ENCODE measurements at regions of chr15 and their contacts with region 1.

Region 1: DNA sequence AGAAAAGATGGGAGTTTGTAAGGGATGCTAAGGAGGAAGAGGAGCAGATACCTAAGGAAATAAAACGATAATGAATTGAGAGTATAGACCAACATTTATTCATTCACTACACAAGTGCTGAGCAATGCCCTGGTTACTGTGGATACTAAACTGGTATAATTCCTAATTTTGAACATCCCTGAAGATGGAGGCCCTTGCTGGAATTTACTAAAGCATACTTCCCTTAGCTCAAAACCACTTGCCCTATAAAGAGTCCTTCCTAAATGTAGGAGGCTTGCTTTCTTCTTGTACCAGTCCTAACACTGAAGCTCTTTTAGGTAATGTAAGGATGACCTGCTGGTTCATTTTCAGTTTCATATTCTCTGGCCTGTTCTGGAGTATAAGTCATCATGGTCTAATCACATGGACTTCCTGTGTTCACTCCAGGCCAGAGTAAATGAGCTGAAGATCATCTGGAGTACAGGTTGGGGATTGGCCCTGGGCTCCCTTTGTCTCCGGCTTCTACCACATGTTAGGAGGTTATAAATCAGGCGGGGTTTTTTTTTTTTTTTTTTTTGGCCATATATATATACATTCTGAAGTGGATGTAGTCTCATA is 40.1 kb upstream of the MTMR10 start:
- DNase-seq: no peak
- ATAC-seq: no peak

Region 2: DNA sequence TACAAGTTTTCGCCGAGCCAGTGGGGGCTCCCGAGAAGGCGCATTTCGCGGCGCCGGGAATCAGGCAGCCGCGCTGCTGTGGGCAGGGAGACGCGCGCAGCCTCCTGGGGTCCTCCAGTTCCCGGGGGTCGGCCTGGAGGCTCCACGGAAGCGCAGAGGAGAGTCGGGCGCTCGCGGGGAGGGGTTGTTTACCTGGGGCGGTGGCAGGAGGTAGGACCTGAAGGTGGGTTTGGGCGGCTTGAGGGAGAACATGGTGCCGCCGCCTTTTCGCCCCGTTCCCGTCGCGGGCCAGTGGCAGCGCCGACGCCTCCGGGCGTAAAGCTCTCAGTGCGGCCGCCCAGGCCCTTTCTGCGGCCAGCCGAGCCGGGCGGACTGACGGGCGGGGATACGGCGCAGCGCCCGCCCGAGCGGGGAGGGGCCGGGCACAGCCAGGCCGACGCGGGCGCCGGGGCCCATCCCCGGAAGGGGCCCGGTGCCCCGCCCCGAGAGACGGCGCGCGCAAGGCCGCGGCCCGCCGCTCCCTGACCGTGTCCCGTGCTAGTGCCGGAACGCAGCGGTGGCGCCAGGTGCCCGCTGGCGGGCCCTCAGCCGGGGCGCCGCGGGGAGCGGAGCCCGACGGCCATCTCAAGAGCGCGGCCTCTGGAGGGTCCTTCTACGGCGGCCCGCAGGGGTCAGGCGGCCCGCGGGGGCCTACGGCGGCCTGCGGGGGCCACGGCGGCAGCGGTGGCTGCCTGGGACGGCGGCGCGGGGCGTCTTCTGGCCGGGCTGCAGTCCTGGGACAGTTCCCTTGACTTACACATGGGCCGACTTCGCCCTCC is 40.1 kb before region 1 on chr15 and contains the start of gene MTMR10:
- intact Hi-C with region 1: loop called (anchors 5 kb)
- DNase-seq: peak; percentile 91
- ATAC-seq: peak; percentile 97
- total RNA-seq, gene MTMR10: 31.4 TPM

Region 3: GRCh38 chr15:31062310-31062847 is 30.8 kb after region 1 on chr15:
- intact Hi-C with region 1: loop called (anchors 2 kb)
- DNase-seq: no peak
- ATAC-seq: no peak

Region 4: GRCh38 chr15:31098953-31099740 is 67.6 kb after region 1 on chr15:
- intact Hi-C with region 1: loop called (anchors 10 kb)
- DNase-seq: no peak
- ATAC-seq: no peak

Region 5: DNA sequence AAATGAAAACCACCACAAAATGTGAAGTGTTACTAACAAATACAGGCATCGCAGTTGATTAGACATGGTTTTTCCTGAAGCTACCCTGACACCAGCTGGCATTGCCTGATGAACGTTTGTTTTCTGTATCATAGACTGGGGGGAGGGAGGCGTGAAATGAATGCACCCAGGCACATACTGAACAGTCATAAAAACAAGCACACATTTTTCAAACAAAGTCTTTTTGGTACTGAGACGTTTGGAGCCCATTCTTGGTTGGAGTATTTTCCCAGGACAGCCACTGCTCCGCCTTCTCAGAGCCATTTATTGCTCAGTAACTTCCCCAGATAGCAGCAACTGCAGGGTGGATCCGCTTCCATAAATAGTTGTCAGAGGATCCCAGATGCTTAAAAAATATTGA is 347.5 kb after region 1 on chr15:
- intact Hi-C with region 1: no loop called
- DNase-seq: no peak
- ATAC-seq: no peak

Measured in Right ventricle myocardium inferior (tissue), 1 donor.